ENCODE measurements at regions of chr18 and their contacts with region 1.

Region 1: DNA sequence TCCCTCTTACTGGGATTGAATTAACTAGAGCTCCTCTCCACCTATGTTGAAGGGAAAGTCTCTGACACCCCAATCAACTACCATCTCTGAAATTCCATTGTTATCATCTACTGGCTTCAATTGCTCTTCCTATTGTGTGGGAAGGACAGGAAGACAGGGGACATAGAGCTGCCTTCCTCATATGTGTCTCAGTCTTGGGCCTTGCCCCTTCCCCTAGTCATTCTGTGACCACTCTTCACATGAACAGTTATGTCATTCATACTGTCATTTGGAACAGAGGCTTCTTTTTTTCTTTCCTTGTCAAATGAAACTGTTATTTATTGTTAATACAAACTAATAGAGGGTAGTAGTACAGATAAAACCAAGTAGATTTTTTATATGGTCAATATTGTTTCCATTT is 69.6 kb upstream of the EMILIN2 start:
- DNase-seq: no peak
- H3K4me3 ChIP-seq: no peak overlapping the region
- H3K27ac ChIP-seq: no peak overlapping the region
- H3K4me1 ChIP-seq: no peaks in the 10 kb centered on the region
- H3K27me3 ChIP-seq: no peaks in the 10 kb centered on the region
- CTCF ChIP-seq: no peak
- POLR2A ChIP-seq: no peak

Region 2: DNA sequence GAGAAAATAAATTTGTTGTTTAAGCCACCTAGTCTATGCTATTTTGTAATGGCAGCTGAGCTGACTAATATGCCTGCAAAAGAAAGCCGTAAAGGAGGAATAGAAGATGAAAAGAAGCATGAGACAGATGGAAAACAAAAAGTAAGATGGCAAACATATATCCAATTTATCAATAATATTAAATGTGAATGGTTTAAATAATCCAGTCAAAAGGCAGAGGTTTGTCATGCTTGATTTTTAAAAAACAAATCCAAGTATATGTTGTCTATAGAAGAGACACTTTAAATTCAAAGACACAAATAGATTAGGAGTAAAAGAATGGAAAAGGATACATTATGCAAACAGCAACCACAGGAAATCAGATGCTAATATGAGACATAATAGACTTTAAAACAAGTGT is 34.2 kb after region 1 on chr18:
- intact Hi-C with region 1: loop called (anchors 2 kb)
- DNase-seq: no peak
- H3K4me3 ChIP-seq: no peak overlapping the region
- H3K27ac ChIP-seq: no peak overlapping the region
- H3K4me1 ChIP-seq: no peaks in the 10 kb centered on the region
- H3K27me3 ChIP-seq: no peaks in the 10 kb centered on the region
- CTCF ChIP-seq: no peak
- POLR2A ChIP-seq: no peak

Measured in breast epithelium (tissue), 4 donors.